OCI-LY7 (cell line): ENCODE measurements at regions of chr16 and their contacts with region 1.

Region 1: DNA sequence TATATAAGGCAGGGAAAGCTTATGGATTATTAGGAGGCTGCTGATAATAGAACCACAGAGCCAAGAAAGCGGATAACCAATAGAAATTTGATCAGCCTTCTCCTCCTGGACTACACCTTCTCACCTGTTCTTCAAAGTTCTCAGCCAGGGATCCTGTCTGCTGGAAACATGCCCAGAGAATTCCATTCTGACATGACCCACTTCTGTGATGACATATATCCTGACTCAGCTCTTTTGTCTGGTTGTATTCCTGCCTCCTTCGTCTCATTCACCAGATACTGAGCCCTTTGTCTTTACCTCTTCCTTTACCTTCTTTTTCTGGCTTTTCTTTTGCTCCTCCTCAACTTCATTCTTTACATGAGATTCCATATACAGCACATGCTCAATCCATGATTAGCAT is 576.1 kb downstream of the CDH11 start:
- DNase-seq: no peak
- H3K4me3 ChIP-seq: no peak overlapping the region
- H3K27ac ChIP-seq: no peak overlapping the region
- H3K4me1 ChIP-seq: no peaks in the 10 kb centered on the region
- CTCF ChIP-seq: no peak

Region 2: DNA sequence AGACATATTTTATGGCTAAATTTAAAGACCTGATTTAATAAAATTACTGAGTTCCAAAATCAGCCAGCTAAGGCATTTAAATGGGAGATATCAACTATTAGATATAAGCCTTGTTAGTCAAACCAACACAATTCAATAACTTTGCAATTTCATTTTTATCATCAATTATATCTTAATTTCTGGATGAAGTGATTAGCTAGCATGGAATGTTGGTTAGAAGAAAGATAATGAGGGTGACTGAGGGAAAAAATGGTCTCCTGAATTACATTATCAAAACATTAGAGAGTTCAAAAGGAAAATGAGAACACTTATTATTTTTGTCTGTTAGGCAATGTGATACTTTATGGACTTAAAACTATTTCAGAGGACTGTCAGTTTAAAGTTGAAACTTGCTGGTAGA is 50.4 kb after region 1 on chr16:
- CTCF ChIA-PET with region 1: no interaction called
- POLR2A ChIA-PET with region 1: no interaction called
- intact Hi-C with region 1: loop called (anchors 10 kb)
- DNase-seq: no peak
- H3K4me3 ChIP-seq: no peak overlapping the region
- H3K27ac ChIP-seq: no peak overlapping the region
- H3K4me1 ChIP-seq: no peaks in the 10 kb centered on the region
- CTCF ChIP-seq: no peak